ENCODE measurements at regions of chr6 and their contacts with region 1.

Region 1: DNA sequence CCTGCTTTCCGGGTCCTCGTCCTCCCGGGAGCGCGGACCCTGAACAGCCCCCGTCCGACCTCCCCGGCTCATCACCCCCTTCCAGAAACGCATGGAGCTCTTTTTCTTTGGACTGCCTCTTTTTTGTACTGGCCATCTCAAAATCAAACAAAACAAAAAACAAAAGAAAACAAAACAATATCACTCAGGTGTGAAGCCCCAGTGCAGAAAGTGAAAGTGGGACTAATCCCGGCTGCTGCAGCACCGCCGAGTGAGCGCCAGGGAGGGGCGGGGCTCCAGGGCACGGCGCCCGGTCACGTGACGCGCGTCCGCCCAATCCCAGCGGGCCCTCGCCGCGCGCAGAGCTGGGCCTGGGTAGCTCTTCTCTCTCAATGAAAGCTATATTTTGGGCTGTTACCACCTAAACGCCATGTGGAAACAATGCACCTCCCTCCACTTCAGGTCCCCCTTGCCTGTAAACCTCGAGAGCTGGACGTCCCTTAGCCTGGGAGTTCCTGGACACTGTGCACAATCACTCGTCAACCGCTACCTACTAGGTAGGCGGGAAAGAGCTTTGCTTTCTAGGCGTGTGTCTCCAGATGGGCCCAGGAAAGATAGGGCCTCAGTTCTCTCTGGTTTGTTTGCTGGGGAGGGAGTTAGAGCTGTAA is 93.7 kb upstream of the PRDM1 start:
- DNase-seq: peak; percentile 89 to 91 (median 91)
- H3K4me3 ChIP-seq: peak overlapping the region; percentile 68 to 90
- H3K4me3 Mint-ChIP-seq: peak overlapping the region; percentile 88 to 98 (median 96)
- H3K27ac ChIP-seq: peak overlapping the region; percentile 72
- H3K27ac Mint-ChIP-seq: peak overlapping the region; percentile 87 to 98 (median 96)
- H3K4me1 ChIP-seq: peaks cover 36% of the 10 kb centered on the region
- H3K4me1 Mint-ChIP-seq: peaks cover 26 to 56% (median 30%) of the 10 kb centered on the region in 4 donors
- H3K27me3 ChIP-seq: peaks cover 4% of the 10 kb centered on the region
- H3K27me3 Mint-ChIP-seq: peaks cover 5 to 12% of the 10 kb centered on the region in 2 donors

Region 2: GRCh38 chr6:105824732-105825131 is 167.7 kb before region 1 on chr6:
- CTCF ChIA-PET with region 1: no interaction called
- POLR2A ChIA-PET with region 1: no interaction called
- intact Hi-C with region 1: no loop called
- DNase-seq: no peak
- H3K4me3 ChIP-seq: no peak overlapping the region
- H3K4me3 Mint-ChIP-seq: no peak overlapping the region
- H3K27ac ChIP-seq: no peak overlapping the region
- H3K27ac Mint-ChIP-seq: no peak overlapping the region
- H3K4me1 ChIP-seq: no peaks in the 10 kb centered on the region
- H3K4me1 Mint-ChIP-seq: no peaks in the 10 kb centered on the region
- H3K27me3 ChIP-seq: no peaks in the 10 kb centered on the region
- H3K27me3 Mint-ChIP-seq: peaks cover 0 to 2% of the 10 kb centered on the region in 2 donors

Region 3: GRCh38 chr6:105967917-105968584 is 24.4 kb before region 1 on chr6:
- CTCF ChIA-PET with region 1: no interaction called
- POLR2A ChIA-PET with region 1: no interaction called
- intact Hi-C with region 1: no loop called
- DNase-seq: no peak
- H3K4me3 ChIP-seq: no peak overlapping the region
- H3K4me3 Mint-ChIP-seq: no peak overlapping the region
- H3K27ac ChIP-seq: no peak overlapping the region
- H3K27ac Mint-ChIP-seq: no peak overlapping the region
- H3K4me1 ChIP-seq: no peaks in the 10 kb centered on the region
- H3K4me1 Mint-ChIP-seq: no peaks in the 10 kb centered on the region
- H3K27me3 ChIP-seq: no peaks in the 10 kb centered on the region
- H3K27me3 Mint-ChIP-seq: no peaks in the 10 kb centered on the region

Region 4: GRCh38 chr6:105981002-105981887 is 11.2 kb before region 1 on chr6:
- CTCF ChIA-PET with region 1: interaction called, 35 read pairs
- POLR2A ChIA-PET with region 1: interaction called, 97 read pairs
- intact Hi-C with region 1: loop called (anchors 1 kb)
- DNase-seq: peak; percentile 33 to 43 (median 38)
- H3K4me3 ChIP-seq: peak overlapping the region; percentile 62 to 65
- H3K4me3 Mint-ChIP-seq: peak overlapping the region; percentile 89 to 92 (median 91)
- H3K27ac ChIP-seq: peak overlapping the region; percentile 18
- H3K27ac Mint-ChIP-seq: peak overlapping the region in 6 of 7 donors; percentile 32 to 89 (median 68)
- H3K4me1 ChIP-seq: peaks cover 36% of the 10 kb centered on the region
- H3K4me1 Mint-ChIP-seq: peaks cover 13 to 40% (median 30%) of the 10 kb centered on the region in 4 donors
- H3K27me3 ChIP-seq: peaks cover 6% of the 10 kb centered on the region
- H3K27me3 Mint-ChIP-seq: peaks cover 21 to 22% of the 10 kb centered on the region in 2 donors

Region 5: GRCh38 chr6:106097411-106098231 is 105.2 kb after region 1 on chr6:
- CTCF ChIA-PET with region 1: interaction called, 21 read pairs
- POLR2A ChIA-PET with region 1: interaction called, 177 read pairs
- intact Hi-C with region 1: loop called (anchors 1 kb)
- DNase-seq: peak; percentile 83 to 92 (median 89)
- H3K4me3 ChIP-seq: peak overlapping the region; percentile 89 to 94
- H3K4me3 Mint-ChIP-seq: peak overlapping the region; percentile 95 to 99 (median 97)
- H3K27ac ChIP-seq: peak overlapping the region; percentile 69
- H3K27ac Mint-ChIP-seq: peak overlapping the region; percentile 94 to 98 (median 98)
- H3K4me1 ChIP-seq: peaks cover 71% of the 10 kb centered on the region
- H3K4me1 Mint-ChIP-seq: peaks cover 46 to 86% (median 60%) of the 10 kb centered on the region in 4 donors
- H3K27me3 ChIP-seq: no peaks in the 10 kb centered on the region
- H3K27me3 Mint-ChIP-seq: no peaks in the 10 kb centered on the region

Region 6: GRCh38 chr6:106163446-106163965 is 171.1 kb after region 1 on chr6:
- CTCF ChIA-PET with region 1: interaction called, 14 read pairs
- POLR2A ChIA-PET with region 1: interaction called, 18 read pairs
- intact Hi-C with region 1: no loop called
- DNase-seq: peak; percentile 44 to 73 (median 51)
- H3K4me3 ChIP-seq: peak overlapping the region in 1 of 2 donors; percentile 27
- H3K4me3 Mint-ChIP-seq: peak overlapping the region; percentile 46 to 78 (median 68)
- H3K27ac ChIP-seq: peak overlapping the region; percentile 57
- H3K27ac Mint-ChIP-seq: peak overlapping the region; percentile 74 to 98 (median 93)
- H3K4me1 ChIP-seq: peaks cover 32% of the 10 kb centered on the region
- H3K4me1 Mint-ChIP-seq: peaks cover 30 to 56% (median 42%) of the 10 kb centered on the region in 4 donors
- H3K27me3 ChIP-seq: no peaks in the 10 kb centered on the region
- H3K27me3 Mint-ChIP-seq: no peaks in the 10 kb centered on the region

Region 7: GRCh38 chr6:106512048-106512967 is 519.9 kb after region 1 on chr6:
- CTCF ChIA-PET with region 1: no interaction called
- POLR2A ChIA-PET with region 1: no interaction called
- intact Hi-C with region 1: loop called (anchors 2 kb)
- DNase-seq: peak; percentile 77 to 84 (median 80)
- H3K4me3 ChIP-seq: peak overlapping the region; percentile 70 to 85
- H3K4me3 Mint-ChIP-seq: peak overlapping the region; percentile 93 to 96 (median 95)
- H3K27ac ChIP-seq: peak overlapping the region; percentile 98
- H3K27ac Mint-ChIP-seq: peak overlapping the region; percentile 92 to 98 (median 98)
- H3K4me1 ChIP-seq: peaks cover 51% of the 10 kb centered on the region
- H3K4me1 Mint-ChIP-seq: peaks cover 28 to 69% (median 47%) of the 10 kb centered on the region in 4 donors
- H3K27me3 ChIP-seq: no peaks in the 10 kb centered on the region
- H3K27me3 Mint-ChIP-seq: no peaks in the 10 kb centered on the region

Measured in CD4-positive, alpha-beta memory T cell (primary cell).